Gastrocnemius medialis (tissue), 4 donors: ENCODE measurements at regions of chr6 and their contacts with region 1.

Region 1: GRCh38 chr6:5764401-5764955 is 242.2 kb downstream of the NRN1 start:
- DNase-seq: peak; percentile 93
- ATAC-seq: peak; percentile 91 to 92
- H3K4me3 ChIP-seq: peak overlapping the region in 3 of 4 donors; percentile 1 to 41 (median 15)
- H3K27ac ChIP-seq: peak overlapping the region; percentile 83 to 96 (median 86)
- H3K4me1 ChIP-seq: peaks cover 18 to 47% of the 10 kb centered on the region in 2 donors
- H3K27me3 ChIP-seq: no peaks in the 10 kb centered on the region
- CTCF ChIP-seq: peak in 1 of 5 experiments; percentile 33
- POLR2A ChIP-seq: peak; percentile 55 to 81

Region 2: GRCh38 chr6:4727671-4728435 is 1036.6 kb before region 1 on chr6:
- in situ Hi-C with region 1: no loop called
- intact Hi-C with region 1: no loop called
- DNase-seq: no peak
- ATAC-seq: no peak
- H3K4me3 ChIP-seq: no peak overlapping the region
- H3K27ac ChIP-seq: no peak overlapping the region
- H3K4me1 ChIP-seq: no peaks in the 10 kb centered on the region
- H3K27me3 ChIP-seq: no peaks in the 10 kb centered on the region
- CTCF ChIP-seq: no peak
- POLR2A ChIP-seq: no peak

Region 3: DNA sequence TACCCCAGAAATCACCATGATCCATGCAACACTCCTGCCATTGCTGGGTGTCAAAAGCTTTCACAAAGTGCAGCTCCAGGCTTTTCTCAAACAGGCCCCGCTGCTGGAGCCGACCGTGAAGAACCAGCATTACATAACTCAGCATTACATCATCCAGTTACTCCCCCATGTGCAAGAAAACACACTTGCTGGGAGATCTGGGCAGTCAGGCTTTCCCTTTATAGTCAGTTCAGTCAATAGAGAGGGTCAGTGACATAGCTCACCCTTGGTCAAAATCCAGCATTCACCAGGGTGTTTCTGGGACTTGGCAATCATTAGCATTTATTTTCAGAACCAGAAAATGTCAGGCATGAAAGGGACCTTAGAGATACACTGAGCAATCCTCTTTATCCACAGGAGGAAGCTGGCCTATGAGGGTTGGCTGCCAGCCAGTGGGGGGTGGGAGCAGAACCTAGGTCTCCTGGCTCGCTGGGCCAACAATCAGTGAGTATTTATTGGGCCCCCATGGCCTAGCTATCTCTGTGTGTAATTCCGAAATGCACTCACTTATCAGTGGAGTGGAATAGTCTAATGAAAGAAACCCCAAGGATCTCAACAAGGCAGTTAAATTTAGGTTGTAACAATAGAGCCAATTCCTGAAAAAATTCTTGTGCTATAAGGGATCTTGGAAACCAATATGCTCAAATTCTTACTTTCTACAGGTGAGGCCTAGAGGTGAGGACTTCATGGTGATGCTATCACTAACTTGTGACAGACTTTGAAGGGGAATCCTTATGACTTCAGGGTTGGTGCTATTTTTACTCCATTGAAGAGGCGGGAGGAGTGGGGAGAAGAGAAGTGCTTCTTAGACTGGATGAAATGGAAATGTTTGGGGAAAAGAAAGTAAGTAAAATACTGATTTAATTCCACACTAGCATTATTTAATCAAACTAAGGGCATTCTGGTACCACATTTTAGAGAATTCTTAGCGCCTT is 558.3 kb before region 1 on chr6:
- in situ Hi-C with region 1: no loop called
- intact Hi-C with region 1: loop called (anchors 5 kb)
- DNase-seq: peak in 1 of 2 donors; percentile 40
- ATAC-seq: peak; percentile 64 to 82
- H3K4me3 ChIP-seq: no peak overlapping the region
- H3K27ac ChIP-seq: peak overlapping the region; percentile 40 to 62 (median 44)
- H3K4me1 ChIP-seq: peaks cover 24 to 38% of the 10 kb centered on the region in 2 donors
- H3K27me3 ChIP-seq: no peaks in the 10 kb centered on the region
- CTCF ChIP-seq: no peak
- POLR2A ChIP-seq: no peak

Region 4: DNA sequence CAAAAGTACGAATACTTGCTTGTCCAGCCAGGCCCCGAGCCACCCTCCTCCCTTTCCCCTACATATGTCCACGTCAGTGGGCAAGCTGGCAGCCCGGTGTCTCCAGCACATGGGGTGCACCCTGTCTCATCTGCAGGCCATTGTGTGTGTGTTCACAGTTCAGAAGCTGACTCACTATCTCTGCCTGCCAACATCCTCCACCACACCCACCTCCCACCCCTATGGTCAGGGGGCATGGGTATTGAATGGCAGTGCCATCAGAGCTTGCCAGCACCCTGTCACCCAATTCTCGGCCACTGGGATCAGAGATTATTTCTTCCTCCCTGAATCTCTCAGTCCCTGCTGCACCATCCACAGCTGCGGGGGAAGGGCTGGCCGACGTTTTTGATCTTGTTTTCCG is 307.4 kb before region 1 on chr6:
- in situ Hi-C with region 1: no loop called
- intact Hi-C with region 1: loop called (anchors 5 kb)
- DNase-seq: peak; percentile 64 to 83
- ATAC-seq: peak; percentile 85 to 90
- H3K4me3 ChIP-seq: peak overlapping the region in 1 of 4 donors; percentile 2
- H3K27ac ChIP-seq: peak overlapping the region; percentile 67 to 83 (median 76)
- H3K4me1 ChIP-seq: peaks cover 11 to 20% of the 10 kb centered on the region in 2 donors
- H3K27me3 ChIP-seq: no peaks in the 10 kb centered on the region
- CTCF ChIP-seq: no peak
- POLR2A ChIP-seq: peak; percentile 13 to 24

Region 5: DNA sequence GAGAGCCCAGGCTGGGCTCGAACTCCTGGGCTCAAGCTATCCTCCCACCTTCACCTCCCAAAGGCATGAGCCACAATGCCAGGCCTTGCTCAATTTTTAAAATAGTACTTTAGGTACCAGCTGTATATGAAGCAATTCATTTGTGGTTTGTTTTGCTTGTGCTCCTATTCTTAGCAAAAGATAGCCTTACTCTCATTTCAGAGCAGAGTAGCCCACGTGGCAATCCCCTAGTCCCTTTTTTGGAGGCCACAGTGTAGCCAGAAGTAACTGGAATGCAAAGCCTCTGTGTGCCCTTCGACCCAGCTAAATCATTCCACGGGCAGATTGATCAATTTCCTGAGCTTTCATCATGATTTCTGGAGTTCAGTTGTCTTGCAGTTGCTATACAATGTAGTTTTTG is 130.0 kb before region 1 on chr6:
- in situ Hi-C with region 1: no loop called
- intact Hi-C with region 1: loop called (anchors 5 kb)
- DNase-seq: peak; percentile 35 to 45
- ATAC-seq: peak; percentile 98
- H3K4me3 ChIP-seq: no peak overlapping the region
- H3K27ac ChIP-seq: peak overlapping the region; percentile 65 to 81 (median 68)
- H3K4me1 ChIP-seq: peaks cover 10 to 12% of the 10 kb centered on the region in 2 donors
- H3K27me3 ChIP-seq: no peaks in the 10 kb centered on the region
- CTCF ChIP-seq: no peak
- POLR2A ChIP-seq: no peak

Region 6: GRCh38 chr6:5746053-5746758 is 18.3 kb before region 1 on chr6:
- in situ Hi-C with region 1: no loop called
- intact Hi-C with region 1: loop called (anchors 1 kb)
- DNase-seq: peak in 1 of 2 donors; percentile 53
- ATAC-seq: peak; percentile 73 to 80
- H3K4me3 ChIP-seq: no peak overlapping the region
- H3K27ac ChIP-seq: no peak overlapping the region
- H3K4me1 ChIP-seq: peaks cover 19 to 22% of the 10 kb centered on the region in 2 donors
- H3K27me3 ChIP-seq: no peaks in the 10 kb centered on the region
- CTCF ChIP-seq: peak in 4 of 5 experiments; percentile 21 to 53 (median 50)
- POLR2A ChIP-seq: no peak

Region 7: GRCh38 chr6:5752391-5752680 is 12.1 kb before region 1 on chr6:
- in situ Hi-C with region 1: no loop called
- intact Hi-C with region 1: loop called (anchors 1 kb)
- DNase-seq: peak; percentile 57 to 61
- ATAC-seq: peak; percentile 75 to 86
- H3K4me3 ChIP-seq: no peak overlapping the region
- H3K27ac ChIP-seq: peak overlapping the region; percentile 80 to 94 (median 86)
- H3K4me1 ChIP-seq: peaks cover 54 to 61% of the 10 kb centered on the region in 2 donors
- H3K27me3 ChIP-seq: no peaks in the 10 kb centered on the region
- CTCF ChIP-seq: no peak
- POLR2A ChIP-seq: no peak

Region 8: DNA sequence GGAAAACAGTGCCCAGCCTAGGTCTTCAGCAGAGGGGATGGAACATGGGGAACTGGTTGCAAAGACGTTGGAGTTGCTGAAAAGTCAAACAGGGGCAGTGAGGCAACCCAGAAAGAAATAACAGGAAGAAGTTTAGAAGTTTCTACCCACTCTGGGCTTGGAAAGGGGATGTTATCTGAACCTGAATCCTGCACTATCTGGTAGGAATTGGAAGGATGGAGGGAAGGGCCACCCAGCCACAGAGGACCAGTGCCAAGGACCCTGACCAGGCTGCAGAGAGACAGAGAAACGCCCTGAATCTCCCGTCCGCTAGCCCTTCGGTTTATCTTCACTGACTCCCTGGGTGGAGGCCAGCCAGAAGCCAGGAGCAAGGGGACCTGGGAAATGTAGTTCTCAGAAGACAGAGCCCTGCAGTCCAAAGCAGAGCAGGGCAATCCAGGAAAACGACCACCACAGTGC is 1126.0 kb after region 1 on chr6:
- in situ Hi-C with region 1: no loop called
- intact Hi-C with region 1: no loop called
- DNase-seq: peak in 1 of 2 donors; percentile 67
- ATAC-seq: no peak
- H3K4me3 ChIP-seq: peak overlapping the region in 1 of 4 donors; percentile 5
- H3K27ac ChIP-seq: peak overlapping the region; percentile 93 to 98 (median 96)
- H3K4me1 ChIP-seq: peaks cover 44 to 56% of the 10 kb centered on the region in 2 donors
- H3K27me3 ChIP-seq: no peaks in the 10 kb centered on the region
- CTCF ChIP-seq: no peak
- POLR2A ChIP-seq: no peak